Activated T-helper 1 cell treated with anti-CD3 and anti-CD28 coated beads, Interleukin-12 subunit alpha, Interleukin-12 subunit beta, Interleukin-2, Interleukin-4 antibody, amounts not matched to agents 30 ng/mL and 10 ng/mL and 1 ng/mL, durations not matched to agents 14 hours and 24 hours and 36 hours (primary cell): ENCODE measurements at regions of chr4 and their contacts with region 1.

Region 1: GRCh38 chr4:122732329-122733026 is at the start of gene BBS12:
- DNase-seq: peak; percentile 98
- H3K4me3 Mint-ChIP-seq: peak within 1 kb of the TSS; percentile 94
- H3K27ac Mint-ChIP-seq: peak within 1 kb of the TSS; percentile 95
- H3K4me1 Mint-ChIP-seq: peaks cover 37% of the 10 kb centered on the region
- H3K27me3 Mint-ChIP-seq: no peaks in the 10 kb centered on the region
- total RNA-seq, gene BBS12: 4.4 and 6.2 TPM in 2 replicates

Region 2: GRCh38 chr4:121869841-121870656 is 862.4 kb before region 1 on chr4 and contains the start of gene BBS7:
- intact Hi-C with region 1: loop called (anchors 1 kb)
- DNase-seq: peak; percentile 94
- H3K4me3 Mint-ChIP-seq: peak within 1 kb of the TSS; percentile 99
- H3K27ac Mint-ChIP-seq: peak within 1 kb of the TSS; percentile 91
- H3K4me1 Mint-ChIP-seq: peaks cover 23% of the 10 kb centered on the region
- H3K27me3 Mint-ChIP-seq: peaks cover 22% of the 10 kb centered on the region
- total RNA-seq, gene BBS7: 16.9 and 20.2 TPM in 2 replicates

Region 3: DNA sequence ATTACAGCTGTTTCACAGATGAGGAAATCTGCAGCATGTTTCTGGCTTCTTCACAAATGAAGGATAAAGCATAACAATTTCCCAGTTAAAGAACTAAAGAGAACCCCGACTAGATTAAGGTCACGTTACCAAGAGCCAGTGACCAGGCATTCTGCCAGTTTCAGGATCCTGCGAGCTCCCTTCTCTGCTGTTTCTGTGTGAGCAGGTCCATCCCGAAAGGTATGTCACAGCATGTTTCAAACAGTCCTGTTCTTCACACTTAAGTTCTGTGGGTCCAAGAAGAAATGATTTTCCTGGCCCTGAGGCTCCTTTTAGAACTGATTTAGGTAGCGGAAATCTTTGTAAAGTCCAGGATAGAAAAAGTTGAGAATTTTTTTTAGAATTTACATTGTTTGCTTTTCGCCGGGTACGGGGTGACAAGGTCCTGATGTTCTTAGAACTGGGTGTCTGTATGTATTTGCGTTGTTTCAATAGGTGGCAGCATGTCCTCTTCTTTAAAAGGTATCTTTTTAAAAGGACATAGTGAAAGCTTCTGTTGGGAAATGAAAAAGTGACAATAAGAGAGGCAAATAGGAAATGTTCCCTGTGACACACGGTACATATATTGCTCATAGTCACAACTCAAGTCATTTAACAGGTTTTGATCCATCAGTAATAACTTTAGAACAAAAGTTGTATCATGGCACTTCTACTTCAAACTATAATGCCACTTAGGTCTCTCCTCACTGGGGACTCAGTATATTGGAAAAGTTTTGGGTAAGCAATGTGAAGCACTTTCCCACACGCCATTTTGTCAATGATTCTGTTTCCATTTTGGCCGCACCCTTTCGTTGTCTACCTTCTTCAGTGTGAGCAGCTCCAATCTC is 130.0 kb before region 1 on chr4:
- intact Hi-C with region 1: loop called (anchors 1 kb)
- DNase-seq: no peak
- H3K4me3 Mint-ChIP-seq: peak overlapping the region; percentile 54
- H3K27ac Mint-ChIP-seq: peak overlapping the region; percentile 55
- H3K4me1 Mint-ChIP-seq: peaks cover 43% of the 10 kb centered on the region
- H3K27me3 Mint-ChIP-seq: no peaks in the 10 kb centered on the region

Region 4: DNA sequence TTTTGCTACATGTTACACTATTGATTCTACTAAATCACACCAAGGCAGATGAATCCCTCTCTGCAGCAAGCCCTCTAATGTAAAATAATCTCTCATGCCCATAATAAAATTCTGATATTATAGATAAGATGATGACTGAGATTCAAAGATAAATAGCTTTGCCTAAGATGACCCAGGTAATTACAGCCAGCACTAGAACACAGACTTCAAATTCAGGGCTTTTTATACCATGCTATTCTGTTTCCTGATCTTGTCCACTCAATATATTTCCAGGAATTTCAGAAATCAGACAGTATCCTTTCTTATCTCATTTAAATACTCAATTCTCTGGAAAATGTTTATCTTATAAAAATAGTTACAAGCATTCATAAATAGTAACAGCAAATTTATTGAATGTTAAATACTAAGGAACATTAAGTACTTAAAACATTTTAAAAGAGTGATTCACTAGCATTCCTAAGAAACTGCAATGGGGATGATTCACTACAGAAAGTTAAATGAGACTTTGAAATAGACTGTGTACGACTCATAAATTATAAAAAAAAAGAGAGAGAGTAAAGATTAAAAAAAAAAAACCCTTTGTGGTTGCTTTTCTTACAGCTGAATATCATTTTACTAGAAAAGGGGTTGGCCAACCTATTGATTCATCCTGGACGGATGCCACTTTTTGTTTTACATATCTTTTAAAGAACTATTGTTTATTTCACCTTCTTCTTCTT is 65.8 kb before region 1 on chr4:
- intact Hi-C with region 1: loop called (anchors 1 kb)
- DNase-seq: no peak
- H3K4me3 Mint-ChIP-seq: peak overlapping the region; percentile 69
- H3K27ac Mint-ChIP-seq: peak overlapping the region; percentile 74
- H3K4me1 Mint-ChIP-seq: peaks cover 88% of the 10 kb centered on the region
- H3K27me3 Mint-ChIP-seq: no peaks in the 10 kb centered on the region

Region 5: DNA sequence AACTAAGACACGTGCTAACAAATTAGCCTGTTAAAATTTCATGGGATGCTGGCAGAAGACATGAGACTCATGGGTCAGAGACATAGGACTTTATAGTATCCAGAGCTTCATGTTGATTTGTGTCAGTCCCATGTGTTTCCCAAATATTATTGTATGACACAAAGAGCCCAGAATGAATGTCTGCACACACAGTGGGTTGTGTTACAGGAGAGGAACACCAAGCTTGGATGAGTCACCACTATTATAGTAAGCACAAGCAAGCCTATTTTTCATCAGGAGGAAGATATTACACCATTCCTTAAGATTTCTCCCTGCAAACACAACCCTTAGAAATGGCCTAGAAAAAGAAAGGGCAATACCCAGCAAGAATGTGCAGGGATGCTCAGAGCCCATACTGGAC is 15.4 kb after region 1 on chr4:
- intact Hi-C with region 1: loop called (anchors 2 kb)
- DNase-seq: no peak
- H3K4me3 Mint-ChIP-seq: no peak overlapping the region
- H3K27ac Mint-ChIP-seq: no peak overlapping the region
- H3K4me1 Mint-ChIP-seq: peaks cover 35% of the 10 kb centered on the region
- H3K27me3 Mint-ChIP-seq: peaks cover 5% of the 10 kb centered on the region